ENCODE measurements at regions of chr4 and their contacts with region 1.

Region 1: GRCh38 chr4:69576251-69576877 is 63.1 kb downstream of the UGT2A2 start:
- DNase-seq: no peak
- H3K4me3 ChIP-seq: no peak overlapping the region
- H3K27ac ChIP-seq: no peak overlapping the region
- H3K4me1 ChIP-seq: no peaks in the 10 kb centered on the region
- CTCF ChIP-seq: no peak

Region 2: GRCh38 chr4:68831642-68832041 is 744.7 kb before region 1 on chr4:
- CTCF ChIA-PET with region 1: no interaction called
- POLR2A ChIA-PET with region 1: no interaction called
- intact Hi-C with region 1: no loop called
- DNase-seq: no peak
- H3K4me3 ChIP-seq: no peak overlapping the region
- H3K27ac ChIP-seq: no peak overlapping the region
- H3K4me1 ChIP-seq: no peaks in the 10 kb centered on the region
- CTCF ChIP-seq: no peak

Region 3: GRCh38 chr4:69546134-69546765 is 30.1 kb before region 1 on chr4:
- CTCF ChIA-PET with region 1: no interaction called
- POLR2A ChIA-PET with region 1: interaction called, 4 read pairs
- intact Hi-C with region 1: loop called (anchors 1 kb)
- DNase-seq: no peak
- H3K4me3 ChIP-seq: no peak overlapping the region
- H3K27ac ChIP-seq: no peak overlapping the region
- H3K4me1 ChIP-seq: no peaks in the 10 kb centered on the region
- CTCF ChIP-seq: no peak

Measured in OCI-LY7 (cell line).